ENCODE measurements at regions of chr10 and their contacts with region 1.

Region 1: GRCh38 chr10:66925896-66926715 is at the start of gene LRRTM3:
- DNase-seq: peak; percentile 41 to 89 (median 79)
- H3K4me3 ChIP-seq: peak within 1 kb of the TSS; percentile 48 to 78 (median 65)
- H3K27ac ChIP-seq: peak within 1 kb of the TSS in 58 of 59 donors; percentile 9 to 94 (median 86)
- H3K27me3 ChIP-seq: peaks cover 0 to 6% (median 0%) of the 10 kb centered on the region in 45 donors
- CTCF ChIP-seq: peak; percentile 34 to 85 (median 74)
- total RNA-seq, gene LRRTM3: 16.5 to 68.7 (median 44.3) TPM

Region 2: DNA sequence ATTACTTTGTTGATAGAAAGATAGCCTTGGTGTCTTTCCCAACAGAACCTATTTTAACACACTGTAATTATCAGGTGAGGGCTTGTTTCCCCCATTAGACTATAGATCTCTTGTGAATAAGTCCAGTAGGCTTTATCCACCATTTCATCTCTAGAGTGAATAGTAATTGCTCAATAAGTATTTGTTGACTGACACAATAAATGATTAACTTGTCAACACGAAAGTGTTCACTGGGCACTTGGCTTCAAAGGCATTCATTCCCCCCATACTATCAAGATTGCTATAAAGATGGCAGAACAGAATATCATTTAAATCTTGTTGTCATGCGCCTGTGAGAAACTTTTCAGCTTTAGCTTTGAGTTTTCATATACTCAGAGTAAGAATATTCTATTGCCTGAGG is 424.8 kb before region 1 on chr10:
- intact Hi-C with region 1: no loop called
- DNase-seq: no peak
- H3K4me3 ChIP-seq: no peak overlapping the region
- H3K27ac ChIP-seq: no peak overlapping the region
- H3K27me3 ChIP-seq: no peaks in the 10 kb centered on the region
- CTCF ChIP-seq: no peak

Region 3: GRCh38 chr10:66862687-66863258 is 63.3 kb before region 1 on chr10:
- intact Hi-C with region 1: no loop called
- DNase-seq: no peak
- H3K4me3 ChIP-seq: no peak overlapping the region
- H3K27ac ChIP-seq: no peak overlapping the region
- H3K27me3 ChIP-seq: no peaks in the 10 kb centered on the region
- CTCF ChIP-seq: no peak

Region 4: DNA sequence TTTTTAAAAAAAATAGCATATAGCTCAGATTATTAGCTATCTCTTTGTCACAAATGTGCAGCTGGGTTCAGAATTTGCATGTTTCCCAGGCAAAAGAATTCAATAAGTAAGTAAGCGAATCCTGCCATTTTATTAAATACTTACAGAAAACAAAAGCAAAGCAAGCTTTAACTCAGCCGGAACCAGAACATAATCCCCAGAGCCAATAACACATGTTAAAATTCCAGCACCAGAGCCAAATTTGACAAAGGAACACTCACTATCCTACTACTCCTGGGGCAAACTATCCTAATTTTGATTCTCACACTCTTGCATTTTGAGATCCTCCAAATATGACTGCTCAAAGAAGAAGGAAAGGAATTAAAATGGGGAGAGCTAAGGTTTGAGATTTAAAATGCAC is 32.4 kb after region 1 on chr10:
- intact Hi-C with region 1: no loop called
- DNase-seq: no peak
- H3K4me3 ChIP-seq: peak overlapping the region in 24 of 59 donors; percentile 0 to 41 (median 16)
- H3K27ac ChIP-seq: peak overlapping the region in 15 of 59 donors; percentile 1 to 46 (median 13)
- H3K27me3 ChIP-seq: no peaks in the 10 kb centered on the region
- CTCF ChIP-seq: no peak

Region 5: DNA sequence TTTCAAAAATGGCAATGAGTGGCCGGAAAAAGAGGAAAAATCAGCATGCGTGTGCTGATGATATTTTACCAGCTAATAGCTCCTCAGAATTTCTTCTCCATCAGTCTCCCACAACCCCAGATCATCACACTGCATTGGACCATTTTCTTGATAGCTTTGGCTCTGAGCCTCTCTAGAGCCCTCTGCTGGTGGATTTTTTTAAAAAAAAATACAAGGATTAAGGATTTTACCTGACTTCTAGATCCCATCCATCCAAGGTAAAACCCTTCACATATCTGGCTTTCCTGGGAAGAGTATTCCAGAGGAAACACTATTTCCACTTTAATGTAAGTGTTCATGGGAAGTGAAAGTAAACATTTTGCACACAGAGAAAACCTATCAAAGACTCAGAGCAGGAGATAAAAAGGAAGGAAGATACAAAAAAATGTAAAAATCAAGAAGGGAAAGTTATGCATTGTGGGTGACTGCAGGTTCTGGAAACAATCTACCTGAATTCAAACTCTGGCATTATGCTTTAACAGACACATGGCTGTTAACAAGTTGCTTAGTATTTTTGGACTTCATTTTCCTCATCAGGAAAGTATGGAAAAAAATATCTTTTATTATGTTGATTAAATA is 380.6 kb after region 1 on chr10:
- intact Hi-C with region 1: loop called (anchors 5 to 10 kb)
- DNase-seq: no peak
- H3K4me3 ChIP-seq: no peak overlapping the region
- H3K27ac ChIP-seq: no peak overlapping the region
- H3K27me3 ChIP-seq: no peaks in the 10 kb centered on the region
- CTCF ChIP-seq: peak; percentile 25 to 74 (median 58)

Region 6: DNA sequence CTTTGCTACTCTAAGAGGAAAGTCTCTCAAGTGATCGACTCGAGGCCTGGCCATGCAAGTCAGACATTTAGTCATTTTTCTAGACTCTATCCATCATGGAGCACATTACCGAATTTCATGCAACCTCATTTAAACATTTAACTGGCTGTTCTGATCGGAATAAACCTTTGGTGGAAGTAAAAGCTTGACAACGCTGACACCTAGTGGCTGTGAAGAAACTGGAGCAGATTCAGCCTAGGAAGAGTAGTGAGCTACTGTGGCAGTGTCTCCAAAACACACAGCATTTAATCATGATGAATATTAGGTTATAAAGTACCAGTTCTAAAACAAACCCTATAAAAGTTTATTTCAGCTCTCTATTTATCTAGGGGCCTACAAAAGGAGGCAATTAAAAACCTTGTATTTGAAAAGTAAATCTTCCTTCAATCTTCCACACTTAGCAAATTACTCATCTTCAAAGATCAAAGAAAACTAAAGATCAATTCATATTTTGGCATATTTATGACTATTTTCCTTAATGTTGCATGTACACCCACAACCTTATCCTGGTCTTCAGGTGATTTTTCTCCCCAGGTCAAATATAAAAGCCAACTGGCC is 594.9 kb after region 1 on chr10:
- intact Hi-C with region 1: loop called (anchors 5 kb)
- DNase-seq: peak in 6 of 10 donors; percentile 35 to 47 (median 41)
- H3K4me3 ChIP-seq: peak overlapping the region in 2 of 59 donors; percentile 18 to 19
- H3K27ac ChIP-seq: peak overlapping the region in 29 of 59 donors; percentile 1 to 73 (median 44)
- H3K27me3 ChIP-seq: no peaks in the 10 kb centered on the region
- CTCF ChIP-seq: peak; percentile 56 to 93 (median 85)

Region 7: GRCh38 chr10:67618116-67618515 is 692.0 kb after region 1 on chr10:
- intact Hi-C with region 1: no loop called
- DNase-seq: no peak
- H3K4me3 ChIP-seq: no peak overlapping the region
- H3K27ac ChIP-seq: no peak overlapping the region
- H3K27me3 ChIP-seq: no peaks in the 10 kb centered on the region
- CTCF ChIP-seq: no peak

Region 8: GRCh38 chr10:67666416-67667034 is 740.4 kb after region 1 on chr10:
- intact Hi-C with region 1: loop called (anchors 10 kb)
- DNase-seq: no peak
- H3K4me3 ChIP-seq: peak overlapping the region in 5 of 59 donors; percentile 2 to 74 (median 67)
- H3K27ac ChIP-seq: peak overlapping the region in 58 of 59 donors; percentile 72 to 98 (median 90)
- H3K27me3 ChIP-seq: no peaks in the 10 kb centered on the region
- CTCF ChIP-seq: peak in 55 of 56 donors; percentile 53 to 89 (median 73)

Region 9: GRCh38 chr10:67764012-67764822 is 838.1 kb after region 1 on chr10:
- intact Hi-C with region 1: loop called in 1 of 2 experiments (anchors 10 kb)
- DNase-seq: peak; percentile 90 to 97 (median 94)
- H3K4me3 ChIP-seq: peak overlapping the region; percentile 57 to 98 (median 80)
- H3K27ac ChIP-seq: peak overlapping the region; percentile 85 to 100 (median 98)
- H3K27me3 ChIP-seq: no peaks in the 10 kb centered on the region
- CTCF ChIP-seq: peak in 13 of 56 donors; percentile 5 to 33 (median 9)

Region 10: GRCh38 chr10:67779465-67780203 is 853.5 kb after region 1 on chr10:
- intact Hi-C with region 1: loop called in 1 of 2 experiments (anchors 10 kb)
- DNase-seq: peak in 6 of 10 donors; percentile 57 to 85 (median 71)
- H3K4me3 ChIP-seq: peak overlapping the region in 19 of 59 donors; percentile 6 to 43 (median 27)
- H3K27ac ChIP-seq: peak overlapping the region in 49 of 59 donors; percentile 6 to 87 (median 71)
- H3K27me3 ChIP-seq: no peaks in the 10 kb centered on the region
- CTCF ChIP-seq: peak; percentile 78 to 98 (median 88)

Measured in dorsolateral prefrontal cortex (tissue), 120 donors.